ENCODE measurements at regions of chr11 and their contacts with region 1.

Region 1: GRCh38 chr11:33742249-33742851 is 6.1 kb upstream of the CD59 start:
- DNase-seq: peak in 3 of 14 experiments; percentile 45 to 49 (median 48)
- ATAC-seq: peak; percentile 71
- H3K4me3 ChIP-seq: no peak overlapping the region
- H3K4me3 Mint-ChIP-seq: no peak overlapping the region
- H3K27ac ChIP-seq: no peak overlapping the region
- H3K27ac Mint-ChIP-seq: peak overlapping the region; percentile 7
- H3K4me1 ChIP-seq: no peaks in the 10 kb centered on the region
- H3K4me1 Mint-ChIP-seq: no peaks in the 10 kb centered on the region
- H3K27me3 ChIP-seq: no peaks in the 10 kb centered on the region
- H3K27me3 Mint-ChIP-seq: no peaks in the 10 kb centered on the region
- CTCF ChIP-seq: peak; percentile 53

Region 2: DNA sequence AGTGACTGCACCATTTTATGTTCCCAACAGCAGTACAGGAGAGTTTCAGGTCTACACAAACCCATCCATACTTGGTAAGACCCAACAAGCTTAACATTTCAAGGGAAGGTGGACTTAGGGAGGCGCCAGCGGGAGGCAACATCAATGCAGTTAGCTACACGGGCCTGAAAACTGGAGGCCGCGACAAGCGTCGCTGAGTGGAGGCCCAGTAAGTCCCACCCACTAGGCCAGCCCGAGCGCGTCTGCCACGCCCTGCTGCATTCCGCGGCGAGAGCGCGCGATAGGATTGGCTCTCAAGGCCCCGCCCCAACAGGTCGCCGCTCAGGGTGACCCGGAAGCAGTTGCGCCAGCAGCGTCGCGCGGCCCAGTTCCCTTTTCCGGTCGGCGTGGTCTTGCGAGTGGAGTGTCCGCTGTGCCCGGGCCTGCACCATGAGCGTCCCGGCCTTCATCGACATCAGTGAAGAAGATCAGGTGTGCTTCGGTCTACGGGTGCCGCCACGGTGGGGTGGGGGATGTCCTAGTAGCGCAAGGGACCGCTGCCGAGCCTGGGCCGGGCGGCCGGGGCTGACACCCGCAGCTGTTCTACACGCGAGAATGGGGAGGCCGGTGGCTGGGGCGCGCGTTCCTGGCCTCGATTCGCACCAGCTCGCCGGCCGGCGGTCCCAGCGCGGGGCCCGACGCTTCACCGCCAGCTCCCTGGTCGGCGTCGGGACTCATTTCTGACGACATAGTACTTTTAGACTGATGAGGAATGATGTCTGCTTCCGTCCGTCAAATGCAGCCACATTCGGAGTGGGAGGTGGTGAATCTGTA is 1158.7 kb before region 1 on chr11 and contains the start of gene EIF3M:
- CTCF ChIA-PET with region 1: no interaction called
- POLR2A ChIA-PET with region 1: no interaction called
- intact Hi-C with region 1: loop called in 1 of 2 experiments (anchors 10 kb)
- DNase-seq: peak; percentile 92 to 98 (median 95)
- ATAC-seq: peak; percentile 98
- H3K4me3 ChIP-seq: peak within 1 kb of the TSS; percentile 89
- H3K4me3 Mint-ChIP-seq: peak within 1 kb of the TSS; percentile 94
- H3K27ac ChIP-seq: peak within 1 kb of the TSS; percentile 84 to 87
- H3K27ac Mint-ChIP-seq: peak within 1 kb of the TSS; percentile 94
- H3K4me1 ChIP-seq: peaks cover 38% of the 10 kb centered on the region
- H3K4me1 Mint-ChIP-seq: peaks cover 52% of the 10 kb centered on the region
- H3K27me3 ChIP-seq: no peaks in the 10 kb centered on the region
- H3K27me3 Mint-ChIP-seq: no peaks in the 10 kb centered on the region
- CTCF ChIP-seq: no peak
- total RNA-seq, gene EIF3M: 260 to 264 TPM

Region 3: GRCh38 chr11:33362051-33362910 is 380.1 kb before region 1 on chr11:
- CTCF ChIA-PET with region 1: interaction called, 4 read pairs
- POLR2A ChIA-PET with region 1: interaction called, 4 read pairs
- intact Hi-C with region 1: loop called (anchors 1 to 2 kb)
- DNase-seq: peak in 4 of 14 experiments; percentile 24 to 70 (median 54)
- ATAC-seq: peak; percentile 70
- H3K4me3 ChIP-seq: no peak overlapping the region
- H3K4me3 Mint-ChIP-seq: no peak overlapping the region
- H3K27ac ChIP-seq: no peak overlapping the region
- H3K27ac Mint-ChIP-seq: no peak overlapping the region
- H3K4me1 ChIP-seq: peaks cover 2% of the 10 kb centered on the region
- H3K4me1 Mint-ChIP-seq: peaks cover 5% of the 10 kb centered on the region
- H3K27me3 ChIP-seq: peaks cover 0 to 2% of the 10 kb centered on the region in 2 experiments
- H3K27me3 Mint-ChIP-seq: peaks cover 11% of the 10 kb centered on the region
- CTCF ChIP-seq: peak; percentile 79

Region 4: DNA sequence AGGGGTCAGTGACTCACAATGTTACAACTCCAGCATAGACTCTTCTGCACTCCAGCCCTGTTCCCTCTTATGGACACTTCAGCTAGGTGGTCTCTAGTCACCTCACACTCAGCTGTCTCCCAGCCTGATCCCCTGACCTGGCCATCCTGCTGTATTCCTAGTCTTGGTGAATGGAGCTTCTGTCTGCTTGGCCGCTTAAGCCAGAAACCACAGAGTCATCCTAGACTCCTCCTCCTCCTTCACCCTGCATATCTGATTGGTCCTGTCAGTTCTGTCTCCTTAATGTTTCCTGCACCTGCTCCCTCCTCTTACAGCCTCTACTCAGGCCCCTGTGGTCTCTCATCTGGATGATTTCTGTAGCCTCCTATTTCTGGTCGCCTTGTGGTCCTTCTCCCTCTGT is 340.3 kb before region 1 on chr11:
- CTCF ChIA-PET with region 1: no interaction called
- POLR2A ChIA-PET with region 1: no interaction called
- intact Hi-C with region 1: no loop called
- DNase-seq: no peak
- ATAC-seq: no peak
- H3K4me3 ChIP-seq: no peak overlapping the region
- H3K4me3 Mint-ChIP-seq: no peak overlapping the region
- H3K27ac ChIP-seq: no peak overlapping the region
- H3K27ac Mint-ChIP-seq: no peak overlapping the region
- H3K4me1 ChIP-seq: no peaks in the 10 kb centered on the region
- H3K4me1 Mint-ChIP-seq: no peaks in the 10 kb centered on the region
- H3K27me3 ChIP-seq: peaks cover 7 to 9% of the 10 kb centered on the region in 2 experiments
- H3K27me3 Mint-ChIP-seq: peaks cover 22% of the 10 kb centered on the region
- CTCF ChIP-seq: no peak

Region 5: GRCh38 chr11:33542921-33543320 is 199.4 kb before region 1 on chr11:
- CTCF ChIA-PET with region 1: no interaction called
- POLR2A ChIA-PET with region 1: no interaction called
- intact Hi-C with region 1: loop called (anchors 1 to 2 kb)
- DNase-seq: peak in 11 of 14 experiments; percentile 5 to 52 (median 12)
- ATAC-seq: no peak
- H3K4me3 ChIP-seq: no peak overlapping the region
- H3K4me3 Mint-ChIP-seq: no peak overlapping the region
- H3K27ac ChIP-seq: no peak overlapping the region
- H3K27ac Mint-ChIP-seq: no peak overlapping the region
- H3K4me1 ChIP-seq: no peaks in the 10 kb centered on the region
- H3K4me1 Mint-ChIP-seq: no peaks in the 10 kb centered on the region
- H3K27me3 ChIP-seq: peaks cover 3 to 14% of the 10 kb centered on the region in 2 experiments
- H3K27me3 Mint-ChIP-seq: peaks cover 58% of the 10 kb centered on the region
- CTCF ChIP-seq: peak; percentile 46

Region 6: GRCh38 chr11:33716236-33716635 is 26.1 kb before region 1 on chr11:
- CTCF ChIA-PET with region 1: interaction called, 15 read pairs
- POLR2A ChIA-PET with region 1: interaction called, 3 read pairs
- intact Hi-C with region 1: no loop called
- DNase-seq: peak in 4 of 14 experiments; percentile 21 to 46 (median 37)
- ATAC-seq: no peak
- H3K4me3 ChIP-seq: no peak overlapping the region
- H3K4me3 Mint-ChIP-seq: no peak overlapping the region
- H3K27ac ChIP-seq: no peak overlapping the region
- H3K27ac Mint-ChIP-seq: no peak overlapping the region
- H3K4me1 ChIP-seq: no peaks in the 10 kb centered on the region
- H3K4me1 Mint-ChIP-seq: peaks cover 4% of the 10 kb centered on the region
- H3K27me3 ChIP-seq: no peaks in the 10 kb centered on the region
- H3K27me3 Mint-ChIP-seq: no peaks in the 10 kb centered on the region
- CTCF ChIP-seq: peak; percentile 22

Region 7: DNA sequence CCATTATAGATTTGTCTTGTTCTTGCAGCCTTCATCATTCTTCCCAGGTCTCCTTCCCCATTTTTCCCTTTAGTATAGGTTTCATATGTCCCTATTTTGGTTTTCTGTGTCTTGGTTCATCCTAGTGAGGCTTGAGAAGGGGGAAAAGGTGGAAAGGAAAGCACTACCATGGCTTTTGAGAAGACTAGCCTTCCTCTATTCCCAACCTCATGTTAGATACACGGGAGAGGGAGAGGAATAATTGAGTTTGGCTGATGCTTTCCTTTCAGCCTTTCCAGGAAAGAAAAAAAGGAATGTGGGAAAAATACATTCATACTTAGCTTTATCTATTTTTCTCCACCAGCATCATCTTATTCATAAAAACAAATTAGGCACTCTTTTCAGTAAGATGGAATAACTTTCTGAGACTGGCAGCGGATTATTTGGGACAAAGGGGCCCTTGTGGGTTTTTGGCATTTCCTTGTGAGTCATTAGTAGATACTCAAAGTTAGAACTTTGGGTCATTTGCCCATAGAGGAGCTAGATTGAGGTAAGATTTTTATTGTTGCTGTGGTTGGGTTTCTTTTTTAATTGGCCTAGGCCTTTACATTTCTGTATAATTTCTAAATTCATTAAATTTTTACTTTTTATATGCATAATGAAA is 332.9 kb after region 1 on chr11:
- CTCF ChIA-PET with region 1: no interaction called
- POLR2A ChIA-PET with region 1: no interaction called
- intact Hi-C with region 1: no loop called
- DNase-seq: no peak
- ATAC-seq: no peak
- H3K4me3 ChIP-seq: no peak overlapping the region
- H3K4me3 Mint-ChIP-seq: no peak overlapping the region
- H3K27ac ChIP-seq: peak overlapping the region; percentile 1 to 13
- H3K27ac Mint-ChIP-seq: peak overlapping the region; percentile 67
- H3K4me1 ChIP-seq: peaks cover 14% of the 10 kb centered on the region
- H3K4me1 Mint-ChIP-seq: peaks cover 57% of the 10 kb centered on the region
- H3K27me3 ChIP-seq: no peaks in the 10 kb centered on the region
- H3K27me3 Mint-ChIP-seq: no peaks in the 10 kb centered on the region
- CTCF ChIP-seq: no peak